GM12878 (cell line): ENCODE measurements at regions of chr12 and their contacts with region 1.

Region 1: GRCh38 chr12:66409195-66409871 is 107.0 kb downstream of the HELB start:
- DNase-seq: no peak
- ATAC-seq: peak; percentile 87
- H3K4me3 ChIP-seq: no peak overlapping the region
- H3K27ac ChIP-seq: no peak overlapping the region
- H3K4me1 ChIP-seq: no peaks in the 10 kb centered on the region
- H3K27me3 ChIP-seq: no peaks in the 10 kb centered on the region
- CTCF ChIP-seq: peak; percentile 57 to 70 (median 61); a peak in 5 of 6 replicates
- EP300 ChIP-seq: no peak
- POLR2A ChIP-seq: no peak
- RAD21 ChIP-seq: peak; percentile 82

Region 2: DNA sequence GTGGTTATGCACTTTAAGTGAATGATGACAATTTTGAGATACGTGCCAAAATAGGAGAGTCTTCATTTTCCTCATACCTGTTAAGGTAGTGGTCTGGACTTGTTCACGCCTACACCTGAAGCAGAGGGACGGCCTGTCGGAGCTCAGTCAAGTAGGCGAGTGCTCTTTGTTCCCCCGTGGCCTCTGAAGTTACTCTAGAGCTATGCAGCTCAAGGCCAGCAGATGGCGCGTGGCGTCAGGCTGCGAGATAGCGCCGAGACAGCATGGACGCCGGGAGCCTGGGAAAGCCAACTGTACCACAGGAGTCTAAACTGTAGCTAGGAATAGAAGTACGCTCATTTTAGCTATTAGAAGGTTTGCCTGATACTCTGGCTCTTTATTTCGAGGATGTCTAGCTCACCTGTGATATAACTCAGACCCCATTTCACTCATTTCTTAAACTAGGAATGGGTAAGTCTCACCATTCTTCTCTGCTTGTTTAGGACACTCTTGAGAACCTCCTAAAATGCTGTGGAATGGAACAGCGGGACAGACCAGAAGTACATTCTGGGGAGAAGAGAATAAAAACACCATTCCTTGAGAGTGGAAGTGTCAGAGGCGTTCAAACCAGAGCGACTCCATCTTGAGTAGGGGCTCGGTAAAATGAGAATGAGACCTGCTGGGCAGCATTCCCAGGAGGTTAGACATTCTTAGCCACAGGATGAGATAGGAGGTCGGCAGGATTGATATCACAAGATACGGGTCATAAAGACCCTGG is 852.5 kb before region 1 on chr12:
- CTCF ChIA-PET with region 1: interaction called, 4 read pairs
- POLR2A ChIA-PET with region 1: no interaction called
- RAD21 ChIA-PET with region 1: interaction called, 3 read pairs
- SMC1A ChIA-PET with region 1: no interaction called
- in situ Hi-C with region 1: no loop called
- intact Hi-C with region 1: loop called (anchors 2 kb)
- DNase-seq: peak; percentile 9
- ATAC-seq: peak; percentile 100
- H3K4me3 ChIP-seq: no peak overlapping the region
- H3K27ac ChIP-seq: no peak overlapping the region
- H3K4me1 ChIP-seq: no peaks in the 10 kb centered on the region
- H3K27me3 ChIP-seq: no peaks in the 10 kb centered on the region
- CTCF ChIP-seq: peak; percentile 91 to 95 (median 94); a peak in 5 of 6 replicates
- EP300 ChIP-seq: no peak
- POLR2A ChIP-seq: no peak
- RAD21 ChIP-seq: peak; percentile 96

Region 3: GRCh38 chr12:66144791-66145754 is 264.3 kb before region 1 on chr12:
- CTCF ChIA-PET with region 1: interaction called, 15 read pairs
- POLR2A ChIA-PET with region 1: no interaction called
- RAD21 ChIA-PET with region 1: interaction called, 9 read pairs
- SMC1A ChIA-PET with region 1: interaction called, 5 read pairs
- in situ Hi-C with region 1: no loop called
- intact Hi-C with region 1: loop called (anchors 1 kb)
- DNase-seq: no peak
- ATAC-seq: peak; percentile 64
- H3K4me3 ChIP-seq: no peak overlapping the region
- H3K27ac ChIP-seq: no peak overlapping the region
- H3K4me1 ChIP-seq: no peaks in the 10 kb centered on the region
- H3K27me3 ChIP-seq: no peaks in the 10 kb centered on the region
- CTCF ChIP-seq: peak; percentile 9 to 59 (median 17); a peak in 2 of 6 replicates
- EP300 ChIP-seq: no peak
- POLR2A ChIP-seq: no peak
- RAD21 ChIP-seq: 0 out of 2 replicates have a peak, but pooled peaks have one; percentile 30

Region 4: GRCh38 chr12:66279123-66279712 is 130.1 kb before region 1 on chr12:
- CTCF ChIA-PET with region 1: interaction called, 29 read pairs
- POLR2A ChIA-PET with region 1: no interaction called
- RAD21 ChIA-PET with region 1: interaction called, 3 read pairs
- SMC1A ChIA-PET with region 1: interaction called, 4 read pairs
- in situ Hi-C with region 1: no loop called
- intact Hi-C with region 1: loop called (anchors 2 kb)
- DNase-seq: no peak
- ATAC-seq: peak; percentile 52; the same call in 1 of the 3 replicates
- H3K4me3 ChIP-seq: no peak overlapping the region
- H3K27ac ChIP-seq: no peak overlapping the region
- H3K4me1 ChIP-seq: no peaks in the 10 kb centered on the region
- H3K27me3 ChIP-seq: no peaks in the 10 kb centered on the region; a peak in 1 of 4 replicates
- CTCF ChIP-seq: peak; percentile 38 to 68 (median 50); a peak in 5 of 6 replicates
- EP300 ChIP-seq: no peak
- POLR2A ChIP-seq: no peak
- RAD21 ChIP-seq: peak; percentile 70

Region 5: GRCh38 chr12:66388517-66388916 is 20.8 kb before region 1 on chr12:
- CTCF ChIA-PET with region 1: no interaction called
- POLR2A ChIA-PET with region 1: no interaction called
- RAD21 ChIA-PET with region 1: no interaction called
- SMC1A ChIA-PET with region 1: no interaction called
- in situ Hi-C with region 1: no loop called
- intact Hi-C with region 1: no loop called
- DNase-seq: no peak
- ATAC-seq: no peak
- H3K4me3 ChIP-seq: no peak overlapping the region
- H3K27ac ChIP-seq: no peak overlapping the region
- H3K4me1 ChIP-seq: no peaks in the 10 kb centered on the region
- H3K27me3 ChIP-seq: no peaks in the 10 kb centered on the region; a peak in 1 of 4 replicates
- CTCF ChIP-seq: no peak
- EP300 ChIP-seq: no peak
- POLR2A ChIP-seq: no peak
- RAD21 ChIP-seq: no peak

Region 6: DNA sequence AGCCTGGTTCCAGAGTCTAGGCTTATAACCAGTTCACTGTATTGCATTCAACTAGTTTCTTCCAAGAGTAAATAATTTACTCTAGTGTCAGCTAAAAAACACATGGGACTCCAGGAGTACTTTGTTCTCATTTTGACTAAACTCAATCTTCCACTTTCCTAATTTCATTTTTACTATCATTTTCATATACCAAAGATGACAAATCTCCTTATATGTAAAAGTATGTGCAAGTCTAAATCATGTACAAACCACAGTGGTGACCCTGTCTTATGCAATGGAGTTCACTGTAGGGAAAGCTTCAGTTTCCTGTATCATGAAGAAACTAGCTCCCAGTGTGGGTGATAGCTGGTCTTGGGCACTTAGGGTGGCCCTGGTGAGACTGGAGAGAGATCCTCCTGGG is 44.5 kb after region 1 on chr12:
- CTCF ChIA-PET with region 1: no interaction called
- POLR2A ChIA-PET with region 1: no interaction called
- RAD21 ChIA-PET with region 1: no interaction called
- SMC1A ChIA-PET with region 1: no interaction called
- in situ Hi-C with region 1: no loop called
- intact Hi-C with region 1: no loop called
- DNase-seq: no peak
- ATAC-seq: peak; percentile 44; the same call in 1 of the 3 replicates
- H3K4me3 ChIP-seq: no peak overlapping the region
- H3K27ac ChIP-seq: no peak overlapping the region
- H3K4me1 ChIP-seq: no peaks in the 10 kb centered on the region
- H3K27me3 ChIP-seq: no peaks in the 10 kb centered on the region
- CTCF ChIP-seq: no peak
- EP300 ChIP-seq: no peak
- POLR2A ChIP-seq: no peak
- RAD21 ChIP-seq: no peak

Region 7: DNA sequence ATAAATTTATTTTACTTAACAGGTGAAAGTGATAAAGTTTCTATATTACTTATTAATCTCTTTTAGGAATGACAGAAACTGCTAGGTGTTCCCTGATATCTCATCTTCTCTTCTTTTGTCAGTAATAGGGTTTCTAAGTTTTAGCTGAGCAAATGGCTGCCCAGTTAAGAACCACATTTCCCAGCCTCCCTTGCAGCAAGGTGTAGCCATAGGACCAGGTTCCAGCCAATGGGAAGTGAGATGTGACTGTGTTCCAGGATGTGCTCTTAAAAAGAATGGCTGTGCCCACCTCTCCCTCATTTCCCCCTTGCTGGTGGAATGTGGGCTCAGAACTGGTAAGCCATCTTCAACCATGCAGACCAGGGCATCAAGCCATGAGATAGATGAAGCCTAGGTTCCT is 58.6 kb after region 1 on chr12:
- CTCF ChIA-PET with region 1: no interaction called
- POLR2A ChIA-PET with region 1: no interaction called
- RAD21 ChIA-PET with region 1: no interaction called
- SMC1A ChIA-PET with region 1: no interaction called
- in situ Hi-C with region 1: no loop called
- intact Hi-C with region 1: no loop called
- DNase-seq: no peak
- ATAC-seq: peak; percentile 66
- H3K4me3 ChIP-seq: no peak overlapping the region
- H3K27ac ChIP-seq: no peak overlapping the region
- H3K4me1 ChIP-seq: no peaks in the 10 kb centered on the region
- H3K27me3 ChIP-seq: no peaks in the 10 kb centered on the region
- CTCF ChIP-seq: no peak
- EP300 ChIP-seq: no peak
- POLR2A ChIP-seq: no peak
- RAD21 ChIP-seq: no peak